ENCODE measurements at regions of chr12 and their contacts with region 1.

Region 1: GRCh38 chr12:43805860-43806736 is at the start of gene TWF1:
- DNase-seq: peak; percentile 81
- H3K4me3 ChIP-seq: peak within 1 kb of the TSS; percentile 70 to 93 (median 74)
- H3K27ac ChIP-seq: peak within 1 kb of the TSS; percentile 89
- H3K4me1 ChIP-seq: peaks cover 13% of the 10 kb centered on the region
- H3K27me3 ChIP-seq: peaks cover 4 to 11% of the 10 kb centered on the region in 2 experiments
- CTCF ChIP-seq: peak; percentile 18 to 48
- POLR2A ChIP-seq: peak; percentile 94
- total RNA-seq, gene TWF1: 75.5 and 75.9 TPM in 2 replicates

Region 2: GRCh38 chr12:43758728-43759563 is 47.2 kb before region 1 on chr12 and contains the starts of genes IRAK4 and PUS7L:
- CTCF ChIA-PET with region 1: interaction called, 13 read pairs
- POLR2A ChIA-PET with region 1: interaction called, 7 read pairs
- dilution Hi-C with region 1: no loop called
- intact Hi-C with region 1: loop called (anchors 1 kb)
- DNase-seq: peak; percentile 98
- H3K4me3 ChIP-seq: peak within 1 kb of the TSS; percentile 65 to 75 (median 66)
- H3K27ac ChIP-seq: peak within 1 kb of the TSS; percentile 75
- H3K4me1 ChIP-seq: peaks cover 17% of the 10 kb centered on the region
- H3K27me3 ChIP-seq: no peaks in the 10 kb centered on the region
- CTCF ChIP-seq: peak; percentile 25 to 58
- POLR2A ChIP-seq: peak; percentile 82
- total RNA-seq, gene IRAK4: 13.1 and 17.1 TPM in 2 replicates
- total RNA-seq, gene PUS7L: 11.4 and 13.1 TPM in 2 replicates

Region 3: DNA sequence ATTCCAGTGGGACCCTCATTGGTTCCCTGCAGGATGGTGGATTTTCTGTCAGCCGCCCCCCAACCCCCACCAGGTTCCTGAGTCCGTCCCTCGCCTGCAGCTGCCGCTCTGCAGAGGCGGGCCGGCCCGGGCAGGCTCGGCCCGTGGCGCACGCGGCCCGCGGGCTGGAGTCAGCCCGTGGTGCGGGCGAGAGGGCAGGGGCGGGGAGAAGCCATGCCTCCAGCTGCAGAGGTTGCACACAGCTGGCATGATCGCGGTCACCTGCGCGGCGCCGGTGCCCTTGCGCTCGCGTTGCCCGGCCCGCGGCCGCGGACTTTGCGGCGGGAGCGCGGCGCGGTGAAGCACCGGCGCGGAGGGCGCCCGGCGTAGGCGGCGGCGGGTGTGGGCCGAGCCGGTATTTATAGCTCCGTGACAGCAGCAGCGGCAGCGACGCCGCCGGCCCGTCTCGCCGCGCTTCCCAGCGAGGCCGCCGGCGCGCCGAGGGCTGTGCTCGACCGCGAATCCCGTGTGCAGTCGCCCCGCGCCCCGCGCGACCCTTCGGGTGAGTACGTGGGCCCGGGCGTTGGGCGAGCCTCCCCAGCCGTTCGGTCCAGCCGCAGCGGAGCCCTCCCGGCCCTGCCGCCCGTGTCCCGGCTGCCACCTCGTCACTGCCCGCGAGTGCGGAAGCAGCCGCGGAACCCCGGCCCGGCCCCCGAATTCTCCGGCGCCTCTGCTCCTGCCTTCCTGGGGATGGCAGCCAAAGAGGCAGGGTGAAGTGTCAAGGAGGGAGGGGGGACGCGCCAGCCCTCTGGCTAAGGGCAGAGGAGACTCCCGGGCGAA is 29.8 kb after region 1 on chr12 and contains the start of gene TMEM117:
- CTCF ChIA-PET with region 1: interaction called, 6 read pairs
- POLR2A ChIA-PET with region 1: no interaction called
- dilution Hi-C with region 1: no loop called
- intact Hi-C with region 1: loop called (anchors 1 kb)
- DNase-seq: peak; percentile 61
- H3K4me3 ChIP-seq: peak within 1 kb of the TSS; percentile 63 to 76 (median 73)
- H3K27ac ChIP-seq: peak within 1 kb of the TSS; percentile 52
- H3K4me1 ChIP-seq: no peaks in the 10 kb centered on the region
- H3K27me3 ChIP-seq: peaks cover 0 to 7% of the 10 kb centered on the region in 2 experiments
- CTCF ChIP-seq: no peak
- POLR2A ChIP-seq: peak; percentile 14
- total RNA-seq, gene TMEM117: 2.7 and 3.8 TPM in 2 replicates

Measured in endothelial cell of umbilical vein (primary cell).